WTC11 (cell line): ENCODE measurements at regions of chr12 and their contacts with region 1.

Region 1: DNA sequence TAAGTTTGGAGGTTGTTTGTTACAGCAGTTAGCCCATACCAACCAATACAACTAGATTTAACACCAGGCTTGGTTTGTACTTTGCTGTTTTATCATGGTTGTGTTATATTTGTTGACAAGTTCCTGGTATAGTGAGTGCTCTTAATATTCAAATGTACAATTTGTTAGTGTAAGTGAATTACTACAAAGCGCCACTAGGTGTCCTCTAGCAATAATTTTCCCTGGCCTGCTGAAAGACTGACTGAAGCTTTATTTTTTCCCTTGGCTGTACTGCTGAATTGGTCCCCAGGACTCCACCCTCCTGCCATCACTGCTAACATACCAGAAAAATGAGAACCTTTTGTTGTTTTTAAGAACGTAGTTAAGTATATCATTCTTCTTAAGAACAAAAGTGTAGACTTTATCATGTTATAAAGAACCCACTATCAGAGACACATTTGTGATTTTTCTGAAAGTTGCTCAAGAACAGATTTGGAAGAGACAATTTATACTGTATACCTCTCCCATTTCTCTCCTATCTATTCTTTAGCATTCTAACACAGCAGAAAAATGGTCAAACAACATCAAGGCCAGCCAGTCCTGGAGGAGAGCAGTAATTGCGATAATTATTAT is 75.3 kb upstream of the FAR2 start:
- DNase-seq: no peak
- ATAC-seq: peak; percentile 28
- H3K4me3 Mint-ChIP-seq: no peak overlapping the region
- H3K27ac Mint-ChIP-seq: no peak overlapping the region
- H3K4me1 Mint-ChIP-seq: peaks cover 60% of the 10 kb centered on the region
- H3K27me3 Mint-ChIP-seq: peaks cover 3% of the 10 kb centered on the region
- CTCF ChIP-seq: peak; percentile 71

Region 2: GRCh38 chr12:29317556-29318363 is 244.0 kb after region 1 on chr12:
- CTCF ChIA-PET with region 1: interaction called, 38 read pairs
- POLR2A ChIA-PET with region 1: no interaction called
- DNase-seq: peak; percentile 18
- ATAC-seq: peak; percentile 97
- H3K4me3 Mint-ChIP-seq: no peak overlapping the region
- H3K27ac Mint-ChIP-seq: no peak overlapping the region
- H3K4me1 Mint-ChIP-seq: peaks cover 12% of the 10 kb centered on the region
- H3K27me3 Mint-ChIP-seq: no peaks in the 10 kb centered on the region
- CTCF ChIP-seq: peak; percentile 34; the same call in 1 of the 2 replicates